Endothelial cell of umbilical vein (primary cell): ENCODE measurements at regions of chr1 and their contacts with region 1.

Region 1: DNA sequence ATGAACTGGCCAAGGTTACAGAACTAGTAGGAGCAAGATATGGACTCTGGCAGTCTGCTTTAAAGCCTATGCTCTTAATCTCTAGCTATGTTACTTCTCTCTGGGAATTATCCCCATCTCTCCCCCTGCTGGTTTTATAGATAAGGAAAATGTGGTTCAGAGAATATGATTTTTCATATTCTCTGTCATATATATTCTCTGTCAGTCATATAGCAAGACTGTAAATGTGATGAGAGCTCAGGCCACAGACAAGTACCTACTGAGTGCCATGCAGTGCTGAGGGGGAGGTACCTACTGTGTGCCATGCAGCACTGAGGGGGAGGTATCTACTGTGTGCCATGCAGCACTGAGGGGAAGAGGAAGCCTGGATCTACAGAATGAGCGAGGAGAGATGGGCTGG is 220.3 kb upstream of the FGGY start:
- DNase-seq: peak; percentile 60
- H3K4me3 ChIP-seq: no peak overlapping the region
- H3K27ac ChIP-seq: no peak overlapping the region
- H3K4me1 ChIP-seq: peaks cover 13% of the 10 kb centered on the region
- H3K27me3 ChIP-seq: no peaks in the 10 kb centered on the region
- CTCF ChIP-seq: peak in 1 of 2 donors; percentile 16
- POLR2A ChIP-seq: no peak

Region 2: DNA sequence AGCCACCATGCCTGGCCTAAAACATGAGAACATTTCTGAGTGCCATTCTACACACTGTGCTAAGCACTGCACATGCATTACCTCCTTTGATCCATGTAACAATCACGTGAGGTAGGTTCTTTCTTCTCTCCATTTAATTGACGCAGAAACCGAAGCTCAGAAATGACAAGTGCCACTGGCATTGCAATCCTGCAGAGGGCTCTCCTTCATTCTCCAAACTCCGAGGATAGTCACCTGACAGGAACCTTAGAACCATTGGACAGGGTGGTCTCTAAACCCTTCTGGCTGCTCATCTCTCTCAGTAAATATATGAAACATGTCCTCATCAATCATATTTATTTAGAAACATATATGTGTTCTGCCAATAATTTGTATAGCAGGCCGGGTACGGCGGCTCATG is 125.7 kb before region 1 on chr1:
- CTCF ChIA-PET with region 1: no interaction called
- POLR2A ChIA-PET with region 1: no interaction called
- dilution Hi-C with region 1: no loop called
- intact Hi-C with region 1: no loop called
- DNase-seq: no peak
- H3K4me3 ChIP-seq: no peak overlapping the region
- H3K27ac ChIP-seq: no peak overlapping the region
- H3K4me1 ChIP-seq: no peaks in the 10 kb centered on the region
- H3K27me3 ChIP-seq: no peaks in the 10 kb centered on the region
- CTCF ChIP-seq: no peak
- POLR2A ChIP-seq: no peak

Region 3: DNA sequence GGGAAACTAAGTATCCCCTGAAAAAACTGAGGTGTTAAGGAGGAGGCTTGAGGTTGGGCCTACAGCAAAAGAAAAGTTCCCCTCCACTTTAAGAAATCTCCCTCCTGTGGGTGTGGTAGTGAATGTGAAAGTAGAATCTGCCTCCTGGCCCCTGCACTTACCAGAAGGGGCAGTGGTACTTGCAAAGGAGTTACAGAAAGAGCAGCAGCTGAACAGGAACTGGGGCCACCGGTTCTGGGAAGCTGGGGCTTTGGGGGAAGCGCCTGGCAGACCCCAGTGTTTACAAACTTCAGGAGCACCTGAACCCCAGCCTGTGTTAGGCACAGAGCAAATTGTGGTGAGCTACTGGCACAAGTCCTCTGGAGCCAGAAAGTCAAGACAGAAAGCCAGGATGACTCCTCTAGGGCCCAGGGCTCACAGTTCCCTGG is 29.9 kb before region 1 on chr1:
- CTCF ChIA-PET with region 1: no interaction called
- POLR2A ChIA-PET with region 1: no interaction called
- dilution Hi-C with region 1: no loop called
- intact Hi-C with region 1: no loop called
- DNase-seq: peak; percentile 28
- H3K4me3 ChIP-seq: no peak overlapping the region
- H3K27ac ChIP-seq: no peak overlapping the region
- H3K4me1 ChIP-seq: no peaks in the 10 kb centered on the region
- H3K27me3 ChIP-seq: no peaks in the 10 kb centered on the region
- CTCF ChIP-seq: no peak
- POLR2A ChIP-seq: no peak

Region 4: GRCh38 chr1:59128784-59129227 is 52.2 kb after region 1 on chr1:
- CTCF ChIA-PET with region 1: no interaction called
- POLR2A ChIA-PET with region 1: no interaction called
- dilution Hi-C with region 1: no loop called
- intact Hi-C with region 1: loop called (anchors 2 kb)
- DNase-seq: peak; percentile 77
- H3K4me3 ChIP-seq: no peak overlapping the region
- H3K27ac ChIP-seq: peak overlapping the region; percentile 87
- H3K4me1 ChIP-seq: peaks cover 32% of the 10 kb centered on the region
- H3K27me3 ChIP-seq: no peaks in the 10 kb centered on the region
- CTCF ChIP-seq: no peak
- POLR2A ChIP-seq: peak; percentile 33